PC-3 (cell line): ENCODE measurements at regions of chr4 and their contacts with region 1.

Region 1: DNA sequence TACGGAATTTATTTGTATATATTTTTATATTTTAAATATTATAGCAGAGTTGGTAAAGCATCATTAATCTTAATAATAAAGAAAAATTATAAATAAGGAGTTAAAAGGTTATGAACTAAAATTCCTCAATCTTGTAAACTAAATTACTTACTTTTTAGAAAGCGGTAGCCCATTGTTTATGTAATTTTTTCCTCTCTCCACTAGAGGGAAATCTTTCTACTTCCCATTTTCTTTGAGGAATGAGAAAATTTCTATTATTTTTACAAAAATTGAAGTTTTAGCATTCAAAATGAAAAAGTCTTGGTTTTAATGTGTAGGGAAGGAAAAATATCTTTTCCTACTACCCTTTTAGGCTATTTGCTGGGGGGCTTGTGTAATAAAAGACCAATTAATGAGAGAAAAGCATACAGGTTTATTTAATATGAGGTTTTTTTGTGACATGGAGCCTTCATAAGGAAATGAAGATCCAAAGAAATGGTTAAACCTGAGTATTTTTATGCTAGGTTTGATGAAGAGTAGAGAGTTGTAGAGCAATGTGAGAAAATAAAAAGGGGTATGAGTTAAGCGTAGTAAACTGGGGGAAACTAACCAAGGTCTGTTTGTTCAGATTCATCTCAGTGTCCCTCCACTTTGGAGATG is 68.7 kb upstream of the ADAD1 start:
- DNase-seq: peak; percentile 31
- ATAC-seq: no peak
- H3K4me3 ChIP-seq: no peak overlapping the region
- H3K27ac ChIP-seq: no peak overlapping the region
- H3K4me1 ChIP-seq: no peaks in the 10 kb centered on the region
- H3K27me3 ChIP-seq: no peaks in the 10 kb centered on the region
- CTCF ChIP-seq: peak; percentile 55

Region 2: GRCh38 chr4:122119739-122120138 is 190.4 kb before region 1 on chr4:
- CTCF ChIA-PET with region 1: no interaction called
- POLR2A ChIA-PET with region 1: no interaction called
- intact Hi-C with region 1: no loop called
- DNase-seq: no peak
- ATAC-seq: no peak
- H3K4me3 ChIP-seq: no peak overlapping the region
- H3K27ac ChIP-seq: no peak overlapping the region
- H3K4me1 ChIP-seq: no peaks in the 10 kb centered on the region; the same call in 1 of the 2 replicates
- H3K27me3 ChIP-seq: no peaks in the 10 kb centered on the region
- CTCF ChIP-seq: no peak

Region 3: DNA sequence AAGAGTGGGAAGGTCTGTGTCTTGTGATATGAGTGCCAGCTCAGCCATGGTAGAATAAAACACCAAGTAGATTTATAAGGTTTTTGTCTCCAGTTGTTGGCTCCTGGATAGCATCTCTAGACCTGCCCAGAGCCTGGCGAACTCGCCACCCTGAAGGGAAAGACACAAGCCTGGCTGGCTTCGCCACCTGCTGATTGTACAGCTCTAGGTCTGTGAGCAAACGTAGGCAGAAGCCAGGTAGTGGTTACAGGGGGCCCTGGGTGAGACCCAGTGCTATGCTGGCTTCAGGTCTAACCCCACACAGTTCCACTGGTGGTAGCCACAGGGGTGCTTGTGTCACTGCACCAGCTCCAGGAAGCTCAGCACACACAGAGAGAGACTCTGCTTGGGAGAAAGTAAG is 57.5 kb before region 1 on chr4:
- CTCF ChIA-PET with region 1: no interaction called
- POLR2A ChIA-PET with region 1: no interaction called
- intact Hi-C with region 1: no loop called
- DNase-seq: no peak
- ATAC-seq: no peak
- H3K4me3 ChIP-seq: no peak overlapping the region
- H3K27ac ChIP-seq: no peak overlapping the region
- H3K4me1 ChIP-seq: no peaks in the 10 kb centered on the region
- H3K27me3 ChIP-seq: no peaks in the 10 kb centered on the region
- CTCF ChIP-seq: no peak

Region 4: DNA sequence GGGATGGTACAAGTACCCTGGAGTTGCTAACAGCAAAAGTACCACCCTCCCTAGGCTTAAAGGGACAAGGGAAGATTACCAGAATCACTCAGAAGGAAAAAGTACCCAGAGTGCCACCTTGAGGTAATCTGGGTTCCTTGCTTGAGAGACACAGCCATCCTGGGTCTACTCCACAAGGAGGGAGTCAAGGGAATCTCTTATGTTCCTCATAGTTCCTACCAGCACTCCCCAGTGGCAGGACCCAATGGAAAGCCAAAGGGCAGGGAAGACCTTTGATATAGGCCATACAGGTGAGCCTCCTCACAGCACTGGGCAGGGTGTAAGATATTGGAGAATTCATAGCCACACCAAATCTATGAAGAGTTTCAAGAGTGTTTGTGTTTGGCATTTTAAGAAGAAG is 140.7 kb after region 1 on chr4:
- CTCF ChIA-PET with region 1: no interaction called
- POLR2A ChIA-PET with region 1: no interaction called
- intact Hi-C with region 1: loop called (anchors 2 kb)
- DNase-seq: peak; percentile 62
- ATAC-seq: peak; percentile 89
- H3K4me3 ChIP-seq: no peak overlapping the region
- H3K27ac ChIP-seq: no peak overlapping the region
- H3K4me1 ChIP-seq: no peaks in the 10 kb centered on the region
- H3K27me3 ChIP-seq: no peaks in the 10 kb centered on the region
- CTCF ChIP-seq: peak; percentile 60